ENCODE measurements at regions of chr4 and their contacts with region 1.

Region 1: DNA sequence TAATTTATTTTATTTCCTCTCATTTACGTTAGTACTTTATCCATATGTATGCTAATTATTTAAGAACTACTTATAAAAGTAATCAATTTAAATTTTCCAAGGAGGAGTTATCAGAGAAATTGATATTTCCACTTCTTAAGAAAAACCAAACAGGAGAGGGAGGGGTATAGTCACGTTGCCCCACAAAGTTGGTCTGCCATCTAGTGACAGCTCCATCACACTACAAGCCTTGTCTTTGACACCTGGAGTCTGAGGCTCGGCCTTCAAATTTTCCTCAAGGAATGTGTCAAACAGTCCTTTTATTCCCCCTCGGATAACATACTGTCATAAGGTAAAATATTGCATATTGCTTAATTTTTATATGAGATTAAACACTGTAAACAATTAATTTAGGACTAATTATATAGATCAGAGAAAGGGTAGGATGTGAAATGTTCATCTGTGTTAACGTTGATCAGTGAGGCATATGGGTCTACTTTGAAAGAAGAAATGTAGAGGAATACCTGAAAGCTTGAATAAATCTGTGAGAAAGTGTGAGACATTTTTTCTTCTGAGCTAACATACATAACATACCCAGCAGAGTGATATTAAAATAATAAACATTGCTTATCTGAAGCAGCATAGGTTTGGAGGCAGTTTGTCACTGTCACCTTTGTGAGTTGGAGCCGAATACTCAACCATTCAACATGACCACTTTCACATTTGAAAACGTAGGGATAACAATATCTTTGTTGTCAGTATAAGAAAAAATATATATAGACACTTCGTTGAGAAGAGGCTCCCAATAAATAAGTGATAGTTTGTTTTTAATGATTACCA is 114.4 kb downstream of the GLRA3 start:
- DNase-seq: peak; percentile 10 to 60
- H3K4me3 ChIP-seq: no peak overlapping the region
- H3K27ac ChIP-seq: no peak overlapping the region
- H3K4me1 ChIP-seq: peaks cover 0 to 4% (median 2%) of the 10 kb centered on the region in 4 experiments; a peak in 1 of 7 replicates
- H3K27me3 ChIP-seq: no peaks in the 10 kb centered on the region
- CTCF ChIP-seq: peak; percentile 63 to 75 (median 64)
- EP300 ChIP-seq: no peak
- POLR2A ChIP-seq: no peak
- RAD21 ChIP-seq: peak; percentile 74 to 77

Region 2: DNA sequence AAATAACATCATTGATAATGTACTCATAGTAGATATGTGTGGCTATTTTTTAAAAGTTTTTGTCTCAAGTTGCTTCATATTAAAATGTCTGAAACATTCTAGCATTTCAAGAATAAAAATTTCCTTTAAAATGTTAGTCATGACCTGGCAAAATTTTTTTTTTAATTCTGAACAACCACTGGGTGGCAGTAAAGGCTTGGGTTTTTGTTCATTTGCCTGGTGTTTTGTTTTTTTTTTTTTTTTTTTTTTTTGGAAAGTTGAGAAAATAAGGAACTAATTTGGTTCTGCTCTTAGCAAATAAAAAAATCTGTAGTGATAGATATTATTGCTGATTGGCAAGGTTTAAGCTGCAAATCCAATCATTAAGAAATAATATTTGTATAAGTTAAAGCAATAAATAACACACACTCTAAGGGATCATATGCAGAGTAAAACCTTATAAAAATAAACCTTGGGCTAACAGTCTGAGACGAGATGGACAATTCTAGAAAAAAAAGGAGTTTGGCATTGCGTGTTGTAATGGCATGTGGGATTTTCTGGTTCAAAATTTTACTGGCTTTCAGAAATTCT is 349.5 kb before region 1 on chr4:
- CTCF ChIA-PET with region 1: interaction called, 10 read pairs
- POLR2A ChIA-PET with region 1: interaction called, 5 read pairs
- DNase-seq: no peak
- H3K4me3 ChIP-seq: no peak overlapping the region
- H3K27ac ChIP-seq: no peak overlapping the region
- H3K4me1 ChIP-seq: no peaks in the 10 kb centered on the region
- H3K27me3 ChIP-seq: no peaks in the 10 kb centered on the region
- CTCF ChIP-seq: peak in 1 of 3 experiments; percentile 42; a peak in 1 of 4 replicates
- EP300 ChIP-seq: no peak
- POLR2A ChIP-seq: no peak
- RAD21 ChIP-seq: peak; percentile 69 to 79

Region 3: GRCh38 chr4:174699654-174700053 is 14.9 kb before region 1 on chr4:
- CTCF ChIA-PET with region 1: interaction called, 12 read pairs
- POLR2A ChIA-PET with region 1: no interaction called
- DNase-seq: no peak
- H3K4me3 ChIP-seq: no peak overlapping the region
- H3K27ac ChIP-seq: no peak overlapping the region
- H3K4me1 ChIP-seq: no peaks in the 10 kb centered on the region
- H3K27me3 ChIP-seq: peaks cover 0 to 1% (median 0%) of the 10 kb centered on the region in 4 experiments; a peak in 1 of 7 replicates
- CTCF ChIP-seq: no peak
- EP300 ChIP-seq: no peak
- POLR2A ChIP-seq: no peak
- RAD21 ChIP-seq: no peak

Region 4: GRCh38 chr4:174724976-174725375 is 10.4 kb after region 1 on chr4:
- CTCF ChIA-PET with region 1: interaction called, 10 read pairs
- POLR2A ChIA-PET with region 1: no interaction called
- DNase-seq: no peak
- H3K4me3 ChIP-seq: no peak overlapping the region
- H3K27ac ChIP-seq: no peak overlapping the region
- H3K4me1 ChIP-seq: no peaks in the 10 kb centered on the region
- H3K27me3 ChIP-seq: no peaks in the 10 kb centered on the region
- CTCF ChIP-seq: no peak
- EP300 ChIP-seq: no peak
- POLR2A ChIP-seq: no peak
- RAD21 ChIP-seq: no peak

Region 5: GRCh38 chr4:174813292-174813691 is 98.7 kb after region 1 on chr4:
- CTCF ChIA-PET with region 1: no interaction called
- POLR2A ChIA-PET with region 1: no interaction called
- DNase-seq: no peak
- H3K4me3 ChIP-seq: no peak overlapping the region
- H3K27ac ChIP-seq: no peak overlapping the region
- H3K4me1 ChIP-seq: no peaks in the 10 kb centered on the region
- H3K27me3 ChIP-seq: no peaks in the 10 kb centered on the region
- CTCF ChIP-seq: no peak
- EP300 ChIP-seq: no peak
- POLR2A ChIP-seq: no peak
- RAD21 ChIP-seq: no peak